PC-3 (cell line): ENCODE measurements at regions of chr15 and their contacts with region 1.

Region 1: GRCh38 chr15:57667171-57667849 is 39.2 kb upstream of the POLR2M start:
- DNase-seq: peak; percentile 65
- ATAC-seq: peak; percentile 93
- H3K4me3 ChIP-seq: peak overlapping the region; percentile 31; the same call in 1 of the 2 replicates
- H3K27ac ChIP-seq: no peak overlapping the region
- H3K4me1 ChIP-seq: 0 out of 2 replicates have a peak, but pooled peaks cover under 1% of the 10 kb centered on the region
- H3K27me3 ChIP-seq: no peaks in the 10 kb centered on the region
- CTCF ChIP-seq: peak; percentile 63

Region 2: GRCh38 chr15:57772223-57772957 is 105.1 kb after region 1 on chr15:
- CTCF ChIA-PET with region 1: no interaction called
- POLR2A ChIA-PET with region 1: no interaction called
- intact Hi-C with region 1: no loop called
- DNase-seq: peak; percentile 68
- ATAC-seq: peak; percentile 88
- H3K4me3 ChIP-seq: no peak overlapping the region
- H3K27ac ChIP-seq: no peak overlapping the region
- H3K4me1 ChIP-seq: 0 out of 2 replicates have a peak, but pooled peaks cover 4% of the 10 kb centered on the region
- H3K27me3 ChIP-seq: no peaks in the 10 kb centered on the region
- CTCF ChIP-seq: no peak

Region 3: GRCh38 chr15:57861036-57861638 is 193.8 kb after region 1 on chr15:
- CTCF ChIA-PET with region 1: interaction called, 3 read pairs
- POLR2A ChIA-PET with region 1: interaction called, 3 read pairs
- intact Hi-C with region 1: loop called (anchors 1 kb)
- DNase-seq: peak; percentile 60
- ATAC-seq: peak; percentile 57
- H3K4me3 ChIP-seq: no peak overlapping the region
- H3K27ac ChIP-seq: no peak overlapping the region
- H3K4me1 ChIP-seq: no peaks in the 10 kb centered on the region
- H3K27me3 ChIP-seq: no peaks in the 10 kb centered on the region
- CTCF ChIP-seq: peak; percentile 84

Region 4: DNA sequence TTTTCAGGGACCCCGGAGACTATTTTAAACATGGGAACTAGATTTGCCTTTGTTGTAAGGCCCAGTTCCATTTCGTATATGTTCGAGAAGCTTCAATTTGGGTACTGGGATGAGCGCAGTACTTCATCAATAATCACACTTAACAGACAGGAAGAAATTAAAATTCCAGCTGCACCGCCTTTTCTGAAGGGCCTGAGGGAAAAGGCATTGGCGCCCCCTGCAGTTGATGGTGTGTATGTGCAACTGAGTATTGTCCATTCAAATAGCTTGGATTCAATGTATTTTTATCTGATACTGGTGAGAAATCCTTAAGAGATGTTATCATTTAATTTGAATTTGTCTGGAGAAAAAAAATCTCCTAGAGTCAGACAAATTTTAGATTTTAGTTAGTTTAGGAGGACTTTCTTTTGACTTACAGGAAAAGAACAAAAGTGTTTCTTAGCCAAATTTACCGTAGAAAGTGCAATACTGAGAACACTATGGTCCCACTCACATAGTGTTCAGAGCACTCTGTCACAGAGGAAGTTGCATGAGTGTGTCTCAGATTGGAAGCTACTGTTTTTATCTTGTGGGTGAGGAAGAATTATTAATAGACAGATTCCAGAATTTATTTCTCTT is 403.6 kb after region 1 on chr15:
- CTCF ChIA-PET with region 1: interaction called, 3 read pairs
- POLR2A ChIA-PET with region 1: no interaction called
- intact Hi-C with region 1: loop called (anchors 5 kb)
- DNase-seq: peak; percentile 64
- ATAC-seq: 0 out of 2 replicates have a peak, but pooled peaks have one; percentile 19
- H3K4me3 ChIP-seq: no peak overlapping the region
- H3K27ac ChIP-seq: no peak overlapping the region
- H3K4me1 ChIP-seq: no peaks in the 10 kb centered on the region
- H3K27me3 ChIP-seq: peaks cover 22% of the 10 kb centered on the region; the same call in 1 of the 2 replicates
- CTCF ChIP-seq: peak; percentile 92